Activated CD4-positive, alpha-beta T cell treated with anti-CD3 and anti-CD28 coated beads for 36 hours (primary cell): ENCODE measurements at regions of chr13 and their contacts with region 1.

Region 1: DNA sequence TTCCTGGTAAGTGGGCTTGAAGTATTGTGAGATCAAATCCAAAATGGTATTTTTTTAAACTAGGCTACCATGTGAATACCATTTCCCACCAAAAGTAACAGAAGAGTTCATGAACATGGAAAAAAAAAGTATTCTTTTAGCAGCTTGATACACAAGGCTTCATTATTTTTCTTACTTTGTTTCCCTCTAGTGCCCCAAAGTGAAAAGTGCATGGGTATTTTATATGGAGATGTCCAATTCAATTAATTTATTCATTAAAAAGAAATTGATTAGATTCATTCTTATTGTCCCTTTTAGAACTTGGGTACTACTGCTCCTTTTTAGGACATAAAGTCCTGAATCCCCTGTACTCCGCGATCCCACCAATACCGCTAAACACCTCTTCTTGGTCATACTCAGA is 28.6 kb upstream of the SCEL start:
- DNase-seq: no peak
- ATAC-seq: no peak
- H3K4me3 Mint-ChIP-seq: no peak overlapping the region
- H3K27ac Mint-ChIP-seq: no peak overlapping the region
- H3K4me1 Mint-ChIP-seq: peaks cover 17% of the 10 kb centered on the region
- H3K27me3 Mint-ChIP-seq: no peaks in the 10 kb centered on the region

Region 2: GRCh38 chr13:77325371-77325980 is 181.4 kb before region 1 on chr13:
- CTCF ChIA-PET with region 1: no interaction called
- POLR2A ChIA-PET with region 1: no interaction called
- intact Hi-C with region 1: no loop called
- DNase-seq: no peak
- ATAC-seq: no peak
- H3K4me3 Mint-ChIP-seq: peak overlapping the region; percentile 90
- H3K27ac Mint-ChIP-seq: peak overlapping the region; percentile 92
- H3K4me1 Mint-ChIP-seq: peaks cover 69% of the 10 kb centered on the region
- H3K27me3 Mint-ChIP-seq: no peaks in the 10 kb centered on the region

Region 3: GRCh38 chr13:77555246-77555645 is 48.4 kb after region 1 on chr13:
- CTCF ChIA-PET with region 1: no interaction called
- POLR2A ChIA-PET with region 1: no interaction called
- intact Hi-C with region 1: loop called in 1 of 2 experiments (anchors 5 kb)
- DNase-seq: no peak
- ATAC-seq: no peak
- H3K4me3 Mint-ChIP-seq: no peak overlapping the region
- H3K27ac Mint-ChIP-seq: no peak overlapping the region
- H3K4me1 Mint-ChIP-seq: peaks cover 20% of the 10 kb centered on the region
- H3K27me3 Mint-ChIP-seq: peaks cover 3% of the 10 kb centered on the region